A673 (cell line): ENCODE measurements at regions of chr5 and their contacts with region 1.

Region 1: DNA sequence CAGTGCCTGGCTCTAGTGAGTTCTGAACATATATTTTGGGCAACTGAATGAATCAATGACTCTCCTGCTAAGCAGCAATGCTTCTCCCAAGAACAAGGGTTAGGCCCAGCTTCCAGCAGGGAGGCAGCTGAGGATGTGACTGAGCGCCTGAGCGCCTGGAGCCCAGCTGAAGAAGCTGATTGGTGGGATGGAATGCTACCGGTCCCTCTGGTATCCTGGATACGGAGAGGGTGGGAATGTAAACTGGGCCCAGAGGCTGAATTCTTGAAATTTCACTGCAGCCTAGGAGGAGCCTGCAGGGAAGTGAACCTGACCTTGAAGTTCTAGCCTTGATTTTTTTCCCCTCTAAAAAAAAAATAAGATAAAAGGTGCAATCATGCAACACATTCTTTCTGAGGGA is 43.2 kb downstream of the WWC1 start:
- DNase-seq: no peak
- H3K4me3 ChIP-seq: no peak overlapping the region
- H3K27ac ChIP-seq: no peak overlapping the region
- H3K4me1 ChIP-seq: no peaks in the 10 kb centered on the region
- H3K27me3 ChIP-seq: no peaks in the 10 kb centered on the region
- CTCF ChIP-seq: no peak

Region 2: DNA sequence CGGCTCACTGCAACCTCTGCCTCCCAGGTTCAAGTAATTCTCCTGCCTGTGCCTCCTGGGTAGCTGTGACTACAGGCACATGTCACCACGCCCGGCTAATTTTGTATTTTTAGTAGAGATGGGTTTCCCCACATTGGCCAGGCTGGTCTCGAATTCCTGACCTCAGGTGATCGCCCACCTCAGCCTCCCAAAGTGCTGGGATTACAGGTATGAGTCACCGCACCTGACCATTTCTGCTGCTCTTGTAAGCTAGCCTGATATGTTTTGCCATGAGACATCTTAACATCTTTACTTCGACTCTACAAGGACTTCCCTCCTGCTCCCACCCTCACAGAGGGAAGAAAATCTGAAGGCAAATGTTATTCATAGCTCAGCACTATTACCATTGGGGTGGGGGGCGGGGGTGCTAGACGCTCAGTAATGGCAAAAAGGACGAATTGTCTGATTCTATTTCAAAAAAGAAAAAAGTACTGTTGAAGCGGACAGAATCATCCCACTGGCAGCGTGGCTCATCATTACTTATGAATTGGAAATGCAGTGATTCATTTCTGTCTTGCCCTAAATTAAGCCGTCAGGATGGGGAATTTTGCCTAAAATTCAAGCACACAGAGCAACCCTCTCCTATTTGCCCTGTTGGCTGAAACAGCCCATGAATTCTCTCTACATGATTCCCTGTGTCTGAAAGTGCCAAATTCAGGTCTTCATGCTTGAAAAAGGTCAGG is 89.7 kb before region 1 on chr5:
- CTCF ChIA-PET with region 1: interaction called, 12 read pairs
- POLR2A ChIA-PET with region 1: no interaction called
- intact Hi-C with region 1: no loop called
- DNase-seq: no peak
- H3K4me3 ChIP-seq: no peak overlapping the region
- H3K27ac ChIP-seq: no peak overlapping the region
- H3K4me1 ChIP-seq: peaks cover 7% of the 10 kb centered on the region
- H3K27me3 ChIP-seq: no peaks in the 10 kb centered on the region
- CTCF ChIP-seq: no peak

Region 3: DNA sequence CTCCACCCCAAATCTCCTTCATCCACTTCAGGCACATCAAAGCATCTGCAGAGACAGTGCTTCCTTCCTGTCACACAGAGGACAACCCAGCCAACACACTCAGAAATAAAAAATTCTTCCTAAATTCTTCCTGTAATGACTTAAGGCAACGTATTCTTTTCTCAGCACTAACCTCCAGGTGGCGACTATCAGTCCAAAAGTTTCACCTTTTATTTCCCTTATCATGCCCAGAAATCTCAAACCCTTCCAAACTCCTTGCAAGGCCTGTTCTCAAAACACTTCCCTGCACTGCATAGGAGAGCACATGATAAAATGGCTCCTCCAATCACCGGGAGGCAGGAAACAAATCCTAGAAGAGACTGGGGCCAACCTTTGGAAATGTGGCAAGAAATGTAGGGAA is 931.2 kb after region 1 on chr5:
- CTCF ChIA-PET with region 1: no interaction called
- POLR2A ChIA-PET with region 1: no interaction called
- intact Hi-C with region 1: no loop called
- DNase-seq: peak; percentile 2
- H3K4me3 ChIP-seq: no peak overlapping the region
- H3K27ac ChIP-seq: no peak overlapping the region
- H3K4me1 ChIP-seq: no peaks in the 10 kb centered on the region
- H3K27me3 ChIP-seq: peaks cover 14% of the 10 kb centered on the region
- CTCF ChIP-seq: peak; percentile 39